ENCODE measurements at regions of chr13 and their contacts with region 1.

Region 1: GRCh38 chr13:101452519-101453485 is at the start of gene ITGBL1:
- DNase-seq: peak; percentile 23 to 56
- H3K4me3 ChIP-seq: peak within 1 kb of the TSS; percentile 86
- H3K27ac ChIP-seq: peak within 1 kb of the TSS; percentile 98
- H3K4me1 ChIP-seq: peaks cover 78% of the 10 kb centered on the region
- H3K27me3 ChIP-seq: no peaks in the 10 kb centered on the region
- CTCF ChIP-seq: no peak
- total RNA-seq, gene ITGBL1: 52.5 and 62.8 TPM in 2 replicates

Region 2: GRCh38 chr13:101211261-101211660 is 241.5 kb before region 1 on chr13:
- CTCF ChIA-PET with region 1: no interaction called
- POLR2A ChIA-PET with region 1: interaction called, 9 read pairs
- intact Hi-C with region 1: loop called (anchors 1 kb)
- DNase-seq: peak in 1 of 2 experiments; percentile 86
- H3K4me3 ChIP-seq: no peak overlapping the region
- H3K27ac ChIP-seq: peak overlapping the region; percentile 85
- H3K4me1 ChIP-seq: peaks cover 18% of the 10 kb centered on the region
- H3K27me3 ChIP-seq: no peaks in the 10 kb centered on the region
- CTCF ChIP-seq: no peak

Region 3: DNA sequence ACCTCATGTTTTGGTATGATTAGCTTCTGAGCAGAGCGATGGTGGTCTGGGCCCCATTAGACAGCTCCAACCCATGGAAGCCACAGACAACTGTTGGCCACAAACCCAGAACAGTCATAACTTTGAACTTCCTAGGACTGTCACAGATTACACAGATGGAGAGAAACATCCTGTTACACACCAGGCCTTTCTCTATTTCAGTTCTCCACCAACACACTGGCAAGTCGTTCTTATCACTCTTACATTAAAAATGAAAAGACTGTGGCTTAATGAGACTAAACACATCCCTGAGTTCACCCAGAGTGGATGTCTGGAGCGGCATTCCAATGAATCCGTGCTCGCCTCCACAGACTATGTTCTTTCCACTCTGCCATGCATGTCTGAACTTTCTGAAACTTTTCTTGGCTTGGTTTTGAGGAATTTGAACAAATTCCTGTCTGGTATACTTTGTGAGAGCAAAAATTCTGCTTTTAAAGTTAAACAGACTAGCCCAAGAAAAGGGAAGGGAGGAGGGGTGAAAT is 145.6 kb before region 1 on chr13:
- CTCF ChIA-PET with region 1: no interaction called
- POLR2A ChIA-PET with region 1: no interaction called
- intact Hi-C with region 1: loop called (anchors 1 kb)
- DNase-seq: no peak
- H3K4me3 ChIP-seq: no peak overlapping the region
- H3K27ac ChIP-seq: no peak overlapping the region
- H3K4me1 ChIP-seq: peaks cover 12% of the 10 kb centered on the region; the same call in 1 of the 2 replicates
- H3K27me3 ChIP-seq: no peaks in the 10 kb centered on the region
- CTCF ChIP-seq: no peak

Region 4: GRCh38 chr13:101397742-101398141 is 55.1 kb before region 1 on chr13:
- CTCF ChIA-PET with region 1: no interaction called
- POLR2A ChIA-PET with region 1: no interaction called
- intact Hi-C with region 1: no loop called
- DNase-seq: no peak
- H3K4me3 ChIP-seq: no peak overlapping the region
- H3K27ac ChIP-seq: 0 out of 2 replicates have a peak overlapping the region, but pooled peaks have one; percentile 35
- H3K4me1 ChIP-seq: peaks cover 10% of the 10 kb centered on the region; the same call in 1 of the 2 replicates
- H3K27me3 ChIP-seq: no peaks in the 10 kb centered on the region
- CTCF ChIP-seq: no peak

Region 5: DNA sequence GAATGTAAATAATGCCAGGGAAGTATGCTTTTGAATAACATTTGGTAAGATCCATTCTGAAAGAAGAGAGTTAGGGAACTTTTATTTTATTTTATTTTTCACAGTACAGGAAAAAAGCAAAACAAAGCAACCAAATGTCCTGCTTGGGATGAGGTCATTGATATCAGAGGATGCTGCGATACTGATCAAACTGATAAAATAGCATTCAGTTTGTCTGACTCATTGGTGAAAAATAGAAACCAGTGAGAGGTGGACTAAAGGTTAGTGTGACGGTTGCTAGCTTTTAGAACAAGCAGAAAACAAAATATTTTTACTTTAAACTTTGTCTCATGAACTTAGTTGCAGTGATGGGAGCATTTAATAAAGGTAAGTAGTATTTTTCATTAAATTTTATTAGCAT is 36.8 kb after region 1 on chr13:
- CTCF ChIA-PET with region 1: no interaction called
- POLR2A ChIA-PET with region 1: interaction called, 3 read pairs
- intact Hi-C with region 1: loop called (anchors 1 kb)
- DNase-seq: peak in 1 of 2 experiments; percentile 92
- H3K4me3 ChIP-seq: peak overlapping the region; percentile 48; the same call in 1 of the 2 replicates
- H3K27ac ChIP-seq: peak overlapping the region; percentile 98
- H3K4me1 ChIP-seq: peaks cover 65% of the 10 kb centered on the region
- H3K27me3 ChIP-seq: no peaks in the 10 kb centered on the region
- CTCF ChIP-seq: no peak

Region 6: DNA sequence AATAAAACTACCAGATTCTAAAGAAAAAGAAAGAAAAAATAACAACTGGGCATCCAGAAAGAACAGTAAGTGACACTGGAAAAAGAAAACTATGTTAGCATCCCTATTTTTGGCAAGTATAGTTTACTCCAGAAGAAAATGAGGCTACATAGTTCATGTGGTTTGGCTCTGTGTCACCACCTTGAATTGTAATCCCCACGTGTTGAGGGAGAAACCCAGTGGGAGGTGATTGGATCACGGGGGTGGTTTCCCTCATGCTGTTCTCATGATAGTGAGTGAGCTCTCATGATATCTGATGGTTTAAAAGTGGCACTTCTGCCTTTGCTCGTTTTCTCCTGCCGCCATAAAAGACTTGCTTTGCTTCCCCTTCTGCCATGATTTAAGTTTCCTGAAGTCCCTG is 76.6 kb after region 1 on chr13:
- CTCF ChIA-PET with region 1: no interaction called
- POLR2A ChIA-PET with region 1: no interaction called
- intact Hi-C with region 1: no loop called
- DNase-seq: no peak
- H3K4me3 ChIP-seq: no peak overlapping the region
- H3K27ac ChIP-seq: no peak overlapping the region
- H3K4me1 ChIP-seq: no peaks in the 10 kb centered on the region
- H3K27me3 ChIP-seq: no peaks in the 10 kb centered on the region
- CTCF ChIP-seq: no peak

Region 7: GRCh38 chr13:101579281-101579802 is 126.5 kb after region 1 on chr13:
- CTCF ChIA-PET with region 1: no interaction called
- POLR2A ChIA-PET with region 1: no interaction called
- intact Hi-C with region 1: loop called (anchors 2 kb)
- DNase-seq: no peak
- H3K4me3 ChIP-seq: no peak overlapping the region
- H3K27ac ChIP-seq: no peak overlapping the region
- H3K4me1 ChIP-seq: peaks cover 24% of the 10 kb centered on the region
- H3K27me3 ChIP-seq: no peaks in the 10 kb centered on the region
- CTCF ChIP-seq: no peak

Region 8: DNA sequence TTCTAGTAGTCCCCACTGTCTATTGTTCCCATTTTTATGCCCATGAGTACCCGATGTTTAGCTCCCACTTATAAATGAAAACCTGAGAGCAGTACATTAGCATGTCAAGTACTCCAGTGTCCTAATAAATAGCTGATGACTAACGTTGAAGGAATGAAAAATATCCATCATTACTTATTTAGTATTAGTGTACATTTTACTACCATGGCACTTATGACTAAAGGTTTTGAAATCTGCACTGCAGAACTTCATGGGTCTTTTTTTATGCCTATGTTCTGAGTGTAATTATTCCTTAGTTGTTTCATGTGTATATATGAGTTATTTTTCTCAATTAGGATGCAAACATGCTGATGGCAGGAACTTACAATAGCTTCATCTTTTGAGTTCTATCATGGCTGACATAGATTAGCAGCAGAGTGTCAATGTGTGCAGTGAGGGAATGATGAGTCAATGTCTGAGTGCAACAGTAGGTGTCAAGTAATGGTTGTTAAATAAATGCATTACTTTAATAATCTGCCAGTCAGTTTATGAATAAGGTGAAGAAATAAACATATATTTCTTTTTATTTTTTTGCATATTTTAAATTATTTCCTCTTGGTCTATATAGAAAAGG is 188.1 kb after region 1 on chr13:
- CTCF ChIA-PET with region 1: no interaction called
- POLR2A ChIA-PET with region 1: interaction called, 5 read pairs
- intact Hi-C with region 1: loop called (anchors 5 kb)
- DNase-seq: peak in 1 of 2 experiments; percentile 92
- H3K4me3 ChIP-seq: no peak overlapping the region
- H3K27ac ChIP-seq: peak overlapping the region; percentile 36
- H3K4me1 ChIP-seq: peaks cover 21% of the 10 kb centered on the region
- H3K27me3 ChIP-seq: no peaks in the 10 kb centered on the region
- CTCF ChIP-seq: no peak

Region 9: GRCh38 chr13:101757446-101758039 is 304.7 kb after region 1 on chr13:
- CTCF ChIA-PET with region 1: no interaction called
- POLR2A ChIA-PET with region 1: no interaction called
- intact Hi-C with region 1: loop called (anchors 1 kb)
- DNase-seq: peak in 1 of 2 experiments; percentile 58
- H3K4me3 ChIP-seq: no peak overlapping the region
- H3K27ac ChIP-seq: no peak overlapping the region
- H3K4me1 ChIP-seq: no peaks in the 10 kb centered on the region
- H3K27me3 ChIP-seq: no peaks in the 10 kb centered on the region
- CTCF ChIP-seq: peak; percentile 89

Region 10: GRCh38 chr13:102020611-102021216 is 567.9 kb after region 1 on chr13:
- CTCF ChIA-PET with region 1: no interaction called
- POLR2A ChIA-PET with region 1: no interaction called
- intact Hi-C with region 1: no loop called
- DNase-seq: peak in 1 of 2 experiments; percentile 66
- H3K4me3 ChIP-seq: no peak overlapping the region
- H3K27ac ChIP-seq: no peak overlapping the region
- H3K4me1 ChIP-seq: no peaks in the 10 kb centered on the region
- H3K27me3 ChIP-seq: no peaks in the 10 kb centered on the region
- CTCF ChIP-seq: no peak